ENCODE measurements at regions of chr1 and their contacts with region 1.

Region 1: DNA sequence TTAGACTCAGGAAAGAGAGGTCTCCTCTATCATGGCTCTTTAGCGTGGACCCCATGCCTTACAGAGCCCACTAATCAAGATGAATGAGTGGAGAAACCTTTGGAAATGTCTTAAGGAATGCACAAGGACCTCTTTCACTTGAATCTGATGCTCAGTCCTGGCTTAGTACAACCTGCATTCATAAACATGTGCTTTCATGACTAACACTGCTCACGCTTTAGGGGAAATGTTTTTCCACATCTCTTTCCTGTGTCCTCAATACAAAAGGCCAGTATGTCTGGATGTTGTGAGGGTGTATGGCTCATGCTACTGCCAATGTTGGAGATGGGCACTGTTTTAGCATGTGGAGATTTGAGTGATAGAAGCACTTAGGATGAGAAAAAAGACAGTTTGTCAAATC is 14.2 kb upstream of the GNG12 start:
- DNase-seq: no peak
- H3K4me3 ChIP-seq: no peak overlapping the region
- H3K27ac ChIP-seq: no peak overlapping the region
- H3K4me1 ChIP-seq: peaks cover 5 to 10% of the 10 kb centered on the region in 2 donors
- H3K27me3 ChIP-seq: no peaks in the 10 kb centered on the region
- CTCF ChIP-seq: no peak
- POLR2A ChIP-seq: no peak

Region 2: DNA sequence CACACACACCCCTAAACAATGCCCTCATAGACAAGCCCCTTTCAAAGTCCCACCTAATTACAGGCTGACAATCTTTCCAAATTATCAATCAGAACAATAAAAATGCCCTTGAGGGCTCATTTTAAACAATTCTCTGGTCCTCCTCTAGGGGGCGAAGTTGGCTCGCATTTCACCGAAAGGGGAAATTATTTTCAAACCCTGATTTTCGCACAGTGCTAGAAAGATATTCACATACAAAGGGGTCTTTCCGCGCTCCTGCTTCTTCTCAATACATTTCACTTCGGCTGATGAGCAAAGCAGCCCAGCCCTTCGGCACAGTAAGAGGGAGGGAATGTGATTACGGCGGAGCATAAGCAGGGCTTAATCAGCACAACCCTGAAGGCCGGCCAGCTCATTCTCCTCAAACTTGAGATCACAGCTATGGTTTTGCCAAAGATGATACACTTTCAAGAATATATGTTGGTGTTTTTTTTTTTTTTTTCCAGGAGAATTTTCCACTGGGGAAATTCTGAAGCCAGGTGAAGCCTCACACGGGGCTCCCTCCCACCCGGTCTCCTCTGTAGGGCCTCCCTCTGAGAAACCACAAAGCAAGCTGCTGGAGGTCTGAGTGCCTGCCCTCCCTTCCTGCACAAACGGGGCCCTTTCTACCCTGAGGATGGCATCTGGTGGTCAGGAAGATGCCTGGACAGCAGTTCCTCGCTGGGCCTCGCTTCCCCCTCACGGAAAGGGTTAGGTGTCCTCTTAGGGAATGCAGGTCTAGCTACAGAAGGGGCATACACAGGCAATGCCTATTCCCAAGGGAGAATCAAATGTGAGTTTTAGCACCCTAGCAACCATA is 81.1 kb before region 1 on chr1:
- intact Hi-C with region 1: loop called (anchors 5 kb)
- DNase-seq: peak; percentile 72 to 88 (median 85)
- H3K4me3 ChIP-seq: peak overlapping the region in 2 of 4 donors; percentile 25 to 36
- H3K27ac ChIP-seq: peak overlapping the region; percentile 28 to 78 (median 62)
- H3K4me1 ChIP-seq: peaks cover 9% of the 10 kb centered on the region in 2 donors
- H3K27me3 ChIP-seq: no peaks in the 10 kb centered on the region
- CTCF ChIP-seq: peak; percentile 66 to 96 (median 82)
- POLR2A ChIP-seq: peak in 1 of 2 donors; percentile 35

Region 3: GRCh38 chr1:67970088-67970487 is 122.6 kb after region 1 on chr1:
- intact Hi-C with region 1: no loop called
- DNase-seq: no peak
- H3K4me3 ChIP-seq: no peak overlapping the region
- H3K27ac ChIP-seq: no peak overlapping the region
- H3K4me1 ChIP-seq: no peaks in the 10 kb centered on the region
- H3K27me3 ChIP-seq: no peaks in the 10 kb centered on the region
- CTCF ChIP-seq: no peak
- POLR2A ChIP-seq: no peak